ENCODE measurements at regions of chr4 and their contacts with region 1.

Region 1: DNA sequence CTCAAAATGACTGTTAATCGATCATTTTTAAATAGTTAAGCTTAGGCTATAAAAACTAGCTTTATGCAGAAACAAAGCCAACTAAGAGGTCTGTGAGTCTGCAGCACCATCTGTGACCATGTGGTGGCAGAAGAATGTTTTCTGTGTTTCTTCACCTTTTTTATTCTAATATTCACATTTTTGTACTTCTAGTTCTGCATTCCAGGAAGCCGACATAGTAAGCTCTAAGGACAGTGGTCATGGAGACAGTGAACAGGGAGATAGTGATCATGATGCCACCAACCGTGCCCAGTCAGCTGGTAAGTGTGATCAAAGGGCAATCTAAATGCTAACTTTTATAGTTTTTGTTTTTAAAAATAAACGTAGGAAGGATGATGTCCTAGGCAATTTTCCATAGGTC is 5.6 kb downstream of the PCDH10 start:
- DNase-seq: no peak
- H3K4me3 ChIP-seq: no peak overlapping the region
- H3K27ac ChIP-seq: no peak overlapping the region
- H3K4me1 ChIP-seq: peaks cover 5 to 17% (median 11%) of the 10 kb centered on the region in 4 experiments
- H3K27me3 ChIP-seq: peaks cover 35 to 41% (median 37%) of the 10 kb centered on the region in 4 experiments; a peak in 6 of 7 replicates
- CTCF ChIP-seq: peak in 2 of 3 experiments; percentile 39 to 63; a peak in 2 of 4 replicates
- EP300 ChIP-seq: no peak
- POLR2A ChIP-seq: no peak
- RAD21 ChIP-seq: peak; percentile 73 to 80

Region 2: DNA sequence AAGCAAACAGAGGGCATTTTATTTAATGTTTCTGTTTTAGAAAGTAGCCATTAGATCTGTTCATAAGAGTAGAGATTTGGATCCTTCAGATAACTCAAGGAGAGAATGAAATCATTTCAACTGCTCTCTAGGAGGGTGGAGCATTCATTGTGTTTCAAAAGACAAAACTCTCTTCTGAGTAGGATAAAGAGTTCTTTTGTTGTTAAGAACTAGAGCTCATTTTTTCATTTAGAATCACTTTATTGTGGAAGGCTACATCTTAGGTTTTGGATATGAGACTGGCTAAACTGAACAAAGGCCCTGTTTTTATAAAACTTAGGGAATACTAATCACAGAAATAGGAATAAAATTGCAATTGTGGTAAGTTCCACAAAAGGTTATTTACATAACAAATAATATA is 199.6 kb before region 1 on chr4:
- CTCF ChIA-PET with region 1: no interaction called
- POLR2A ChIA-PET with region 1: no interaction called
- DNase-seq: no peak
- H3K4me3 ChIP-seq: no peak overlapping the region
- H3K27ac ChIP-seq: no peak overlapping the region
- H3K4me1 ChIP-seq: no peaks in the 10 kb centered on the region
- H3K27me3 ChIP-seq: no peaks in the 10 kb centered on the region
- CTCF ChIP-seq: no peak
- EP300 ChIP-seq: no peak
- POLR2A ChIP-seq: no peak
- RAD21 ChIP-seq: no peak

Region 3: GRCh38 chr4:133320576-133321170 is 165.9 kb after region 1 on chr4:
- CTCF ChIA-PET with region 1: interaction called, 10 read pairs
- POLR2A ChIA-PET with region 1: no interaction called
- DNase-seq: no peak
- H3K4me3 ChIP-seq: no peak overlapping the region
- H3K27ac ChIP-seq: no peak overlapping the region
- H3K4me1 ChIP-seq: no peaks in the 10 kb centered on the region
- H3K27me3 ChIP-seq: no peaks in the 10 kb centered on the region
- CTCF ChIP-seq: peak in 2 of 3 experiments; percentile 54 to 67; a peak in 3 of 4 replicates
- EP300 ChIP-seq: no peak
- POLR2A ChIP-seq: no peak
- RAD21 ChIP-seq: peak; percentile 75 to 83

Measured in H1 (cell line).